IMR-90 (cell line): ENCODE measurements at regions of chr7 and their contacts with region 1.

Region 1: GRCh38 chr7:17325364-17325763 is 26.9 kb downstream of the AHR start:
- DNase-seq: peak; percentile 19
- ATAC-seq: no peak
- H3K4me3 ChIP-seq: no peak overlapping the region
- H3K27ac ChIP-seq: no peak overlapping the region
- H3K4me1 ChIP-seq: peaks cover 2% of the 10 kb centered on the region; the same call in 1 of the 2 replicates
- H3K27me3 ChIP-seq: no peaks in the 10 kb centered on the region
- CTCF ChIP-seq: no peak
- POLR2A ChIP-seq: no peak
- RAD21 ChIP-seq: no peak

Region 2: GRCh38 chr7:17434841-17435692 is 109.7 kb after region 1 on chr7:
- CTCF ChIA-PET with region 1: no interaction called
- POLR2A ChIA-PET with region 1: no interaction called
- dilution Hi-C with region 1: no loop called
- in situ Hi-C with region 1: no loop called
- intact Hi-C with region 1: no loop called
- DNase-seq: no peak
- ATAC-seq: no peak
- H3K4me3 ChIP-seq: no peak overlapping the region
- H3K27ac ChIP-seq: no peak overlapping the region
- H3K4me1 ChIP-seq: no peaks in the 10 kb centered on the region
- H3K27me3 ChIP-seq: no peaks in the 10 kb centered on the region
- CTCF ChIP-seq: no peak
- POLR2A ChIP-seq: no peak
- RAD21 ChIP-seq: no peak

Region 3: GRCh38 chr7:18552943-18553584 is 1227.7 kb after region 1 on chr7:
- CTCF ChIA-PET with region 1: no interaction called
- POLR2A ChIA-PET with region 1: no interaction called
- dilution Hi-C with region 1: no loop called
- in situ Hi-C with region 1: no loop called
- intact Hi-C with region 1: loop called (anchors 10 kb)
- DNase-seq: no peak
- ATAC-seq: no peak
- H3K4me3 ChIP-seq: no peak overlapping the region
- H3K27ac ChIP-seq: no peak overlapping the region
- H3K4me1 ChIP-seq: no peaks in the 10 kb centered on the region
- H3K27me3 ChIP-seq: no peaks in the 10 kb centered on the region
- CTCF ChIP-seq: no peak
- POLR2A ChIP-seq: no peak
- RAD21 ChIP-seq: no peak